Esophagus muscularis mucosa (tissue), 4 donors: ENCODE measurements at regions of chr5 and their contacts with region 1.

Region 1: DNA sequence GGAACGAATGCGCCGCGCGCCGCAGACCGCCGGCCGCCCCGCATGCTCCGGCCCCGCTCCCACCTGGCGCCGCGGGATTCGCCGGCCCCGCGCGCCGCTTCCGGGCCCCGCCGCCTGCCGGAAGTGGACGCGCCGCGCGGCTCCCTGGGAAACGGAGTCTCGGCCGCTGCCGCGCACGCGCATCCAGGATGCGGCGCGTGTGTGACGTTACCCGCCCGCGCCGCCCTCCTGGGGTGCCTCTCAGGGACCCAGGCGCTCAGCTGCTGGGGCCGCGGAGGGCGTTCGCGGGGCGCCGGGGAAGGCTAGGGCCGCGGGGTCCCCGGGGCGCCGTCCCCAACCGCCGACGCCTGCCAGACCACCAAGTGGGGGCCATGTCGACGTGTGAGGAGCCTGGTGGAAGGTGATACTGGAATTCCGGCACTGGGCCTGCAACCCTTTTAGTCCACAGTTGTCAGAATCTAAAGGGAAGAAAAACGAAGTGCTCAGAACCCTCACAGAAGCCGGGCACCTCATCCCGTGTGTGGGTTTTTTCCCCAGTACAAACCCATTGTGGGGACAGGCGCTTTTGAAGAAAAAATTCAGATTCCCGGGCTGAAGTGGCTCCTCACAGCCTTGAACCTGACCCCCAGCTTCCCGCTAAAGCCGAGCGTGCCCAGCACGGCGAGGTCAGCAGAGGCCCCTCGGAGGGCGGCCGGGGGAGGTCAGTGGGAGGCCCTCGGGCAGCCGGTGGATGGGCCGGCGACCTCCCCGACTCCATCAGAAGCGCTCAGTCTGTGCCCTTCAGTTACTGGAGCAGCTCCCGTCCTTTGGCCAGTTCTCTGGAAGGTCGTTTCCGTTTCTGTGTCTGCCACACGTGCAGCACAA is at the start of gene CLPTM1L:
- DNase-seq: peak; percentile 95
- H3K4me3 ChIP-seq: peak within 1 kb of the TSS; percentile 80 to 95 (median 92)
- H3K27ac ChIP-seq: peak within 1 kb of the TSS; percentile 83 to 92 (median 90)
- H3K4me1 ChIP-seq: peaks cover 18 to 36% (median 30%) of the 10 kb centered on the region in 4 donors
- H3K27me3 ChIP-seq: no peaks in the 10 kb centered on the region
- CTCF ChIP-seq: peak in 1 of 3 experiments; percentile 45
- EP300 ChIP-seq: no peak
- POLR2A ChIP-seq: peak; percentile 82
- total RNA-seq, gene CLPTM1L: 96.9 to 139 (median 126) TPM

Region 2: GRCh38 chr5:1420211-1421195 is 75.3 kb after region 1 on chr5:
- intact Hi-C with region 1: no loop called
- DNase-seq: no peak
- H3K4me3 ChIP-seq: no peak overlapping the region
- H3K27ac ChIP-seq: no peak overlapping the region
- H3K4me1 ChIP-seq: no peaks in the 10 kb centered on the region
- H3K27me3 ChIP-seq: peaks cover 0 to 35% (median 0%) of the 10 kb centered on the region in 4 donors
- CTCF ChIP-seq: no peak
- EP300 ChIP-seq: no peak
- POLR2A ChIP-seq: no peak

Region 3: GRCh38 chr5:1799602-1800471 is 454.6 kb after region 1 on chr5 and contains the start of gene MRPL36:
- intact Hi-C with region 1: loop called (anchors 10 kb)
- DNase-seq: peak; percentile 98
- H3K4me3 ChIP-seq: peak within 1 kb of the TSS; percentile 74 to 86 (median 82)
- H3K27ac ChIP-seq: peak within 1 kb of the TSS; percentile 80 to 87 (median 82)
- H3K4me1 ChIP-seq: peaks cover 25 to 64% (median 48%) of the 10 kb centered on the region in 4 donors
- H3K27me3 ChIP-seq: no peaks in the 10 kb centered on the region
- CTCF ChIP-seq: no peak
- EP300 ChIP-seq: no peak
- POLR2A ChIP-seq: peak; percentile 46
- total RNA-seq, gene MRPL36: 42.6 to 56.1 (median 46.2) TPM